Psoas muscle (tissue), 8 donors: ENCODE measurements at regions of chr7 and their contacts with region 1.

Region 1: DNA sequence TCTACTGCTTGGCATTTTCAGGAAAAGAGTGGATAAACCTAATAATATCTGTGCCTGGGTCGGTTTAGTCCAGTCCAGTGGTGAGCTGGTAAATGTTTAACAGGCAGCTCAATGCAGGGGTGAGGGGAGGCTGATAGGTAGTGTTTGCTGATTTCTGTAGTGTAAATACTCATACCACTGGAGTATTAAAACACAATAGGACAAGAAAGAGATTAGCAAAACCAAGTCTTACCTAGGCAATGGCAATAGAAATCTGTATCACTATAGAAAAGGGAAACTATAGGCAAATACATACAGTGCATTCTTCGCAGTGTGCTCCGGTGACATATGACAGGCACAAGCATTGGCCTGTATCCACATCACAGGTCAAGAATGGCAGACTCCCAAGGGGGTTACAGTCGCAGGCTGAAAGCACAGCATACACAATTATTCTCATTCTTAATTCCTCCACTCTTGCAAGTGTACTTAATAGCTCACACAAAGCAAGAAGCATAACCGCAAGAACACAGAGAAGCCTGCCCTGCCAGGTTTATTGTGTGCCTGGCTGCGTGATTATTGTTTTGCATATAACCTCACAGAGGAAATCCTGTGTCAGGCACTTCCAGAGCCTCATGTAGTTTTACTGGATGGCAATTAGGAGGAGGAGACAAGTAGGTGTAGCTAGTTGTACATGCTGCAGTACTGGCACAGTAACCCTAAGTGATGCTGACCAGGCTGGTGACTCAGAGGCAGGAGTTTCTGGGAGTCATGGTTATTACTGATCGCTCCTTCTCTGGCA is 35.0 kb downstream of the LAMB4 start:
- DNase-seq: no peak
- ATAC-seq: peak in 3 of 4 donors; percentile 33 to 60 (median 54)
- H3K4me3 ChIP-seq: peak overlapping the region; percentile 34
- H3K27ac ChIP-seq: peak overlapping the region; percentile 52
- H3K4me1 ChIP-seq: no peaks in the 10 kb centered on the region
- H3K27me3 ChIP-seq: peaks cover 0 to 3% (median 0%) of the 10 kb centered on the region in 3 donors
- CTCF ChIP-seq: no peak

Region 2: GRCh38 chr7:108002726-108003598 is 92.2 kb before region 1 on chr7 and contains the start of gene LAMB1:
- intact Hi-C with region 1: loop called in 1 of 2 experiments (anchors 5 kb)
- DNase-seq: peak; percentile 81 to 87
- ATAC-seq: peak; percentile 54 to 70 (median 68)
- H3K4me3 ChIP-seq: peak within 1 kb of the TSS; percentile 68
- H3K27ac ChIP-seq: peak within 1 kb of the TSS; percentile 53
- H3K4me1 ChIP-seq: peaks cover 3% of the 10 kb centered on the region
- H3K27me3 ChIP-seq: peaks cover 0 to 64% (median 9%) of the 10 kb centered on the region in 3 donors
- CTCF ChIP-seq: no peak
- total RNA-seq, gene LAMB1: 23.7 to 43.6 (median 26.4) TPM

Region 3: DNA sequence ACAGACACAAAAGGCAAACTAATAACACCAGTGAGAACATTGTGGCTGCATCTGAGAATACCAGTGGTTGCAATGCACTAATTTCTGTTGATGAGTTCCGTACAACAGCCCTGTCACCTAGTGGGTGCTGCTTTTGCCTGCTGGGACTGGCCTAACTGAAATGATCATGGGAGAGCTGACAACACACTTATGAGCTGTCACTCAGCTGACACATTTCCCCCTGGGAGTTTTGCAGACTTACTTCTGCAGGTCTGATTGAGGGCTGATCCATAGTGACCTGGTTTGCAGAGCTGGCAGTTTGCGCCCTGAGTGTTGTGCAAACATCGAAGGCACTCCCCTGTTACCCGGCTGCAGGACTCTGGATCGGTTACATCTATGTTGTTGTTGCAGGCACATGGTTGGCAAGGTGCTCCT is 31.6 kb before region 1 on chr7:
- intact Hi-C with region 1: no loop called
- DNase-seq: no peak
- ATAC-seq: no peak
- H3K4me3 ChIP-seq: no peak overlapping the region
- H3K27ac ChIP-seq: no peak overlapping the region
- H3K4me1 ChIP-seq: no peaks in the 10 kb centered on the region
- H3K27me3 ChIP-seq: no peaks in the 10 kb centered on the region
- CTCF ChIP-seq: no peak